K562 (cell line): ENCODE measurements at regions of chr12 and their contacts with region 1.

Region 1: DNA sequence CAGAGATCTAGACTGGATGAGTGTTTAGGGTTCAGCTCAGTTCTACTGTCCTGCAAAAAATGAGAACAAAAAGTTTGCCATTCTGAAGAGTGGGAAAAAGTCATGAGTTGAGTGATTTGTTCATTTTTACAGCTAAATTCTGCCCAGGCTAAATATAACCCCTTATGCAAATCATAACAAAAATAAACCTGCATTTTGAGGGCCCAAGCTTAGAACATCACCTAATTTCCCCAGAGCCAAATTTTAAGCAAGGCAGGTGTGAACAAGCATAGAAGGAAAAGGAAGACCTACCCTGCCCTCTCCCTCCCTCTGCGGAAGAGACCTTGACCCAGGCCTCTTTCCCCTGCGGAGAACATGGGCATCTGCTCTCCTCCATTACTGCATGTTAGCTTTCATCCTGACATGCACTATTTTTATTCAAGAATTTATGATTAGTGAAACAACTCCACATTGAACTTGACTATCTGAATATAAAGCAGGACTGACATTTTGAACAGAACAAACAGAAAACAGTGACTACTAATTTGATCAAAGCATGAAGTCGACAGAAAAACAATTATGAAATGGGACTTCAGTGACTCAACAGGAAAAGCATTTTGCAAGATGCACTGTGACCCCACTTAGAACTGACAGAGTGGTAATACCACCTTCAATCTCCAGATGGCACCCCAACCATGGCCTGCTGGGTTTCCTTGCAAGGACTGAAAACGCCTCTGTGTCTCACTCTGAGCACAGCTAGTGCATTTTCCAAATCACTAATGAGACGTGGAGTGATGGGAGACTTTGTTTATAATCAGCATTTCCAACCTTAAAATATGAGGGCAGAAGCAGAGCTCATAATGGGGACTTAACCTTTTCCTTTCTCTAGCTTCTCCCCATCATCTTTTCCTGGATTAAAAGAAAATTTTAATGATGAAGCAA is 30.9 kb upstream of the SELPLG start:
- DNase-seq: peak; percentile 74 to 88 (median 78)
- ATAC-seq: peak; percentile 98
- H3K4me3 ChIP-seq: no peak overlapping the region
- H3K27ac ChIP-seq: peak overlapping the region; percentile 60; the same call in 2 of the 3 replicates
- H3K4me1 ChIP-seq: peaks cover 0 to 13% of the 10 kb centered on the region in 2 experiments; a peak in 3 of 5 replicates
- H3K27me3 ChIP-seq: no peaks in the 10 kb centered on the region
- CTCF ChIP-seq: peak; percentile 90 to 96 (median 91)
- EP300 ChIP-seq: peak; percentile 12; the same call in 1 of the 2 replicates
- POLR2A ChIP-seq: no peak
- RAD21 ChIP-seq: peak; percentile 95 to 99

Region 2: GRCh38 chr12:108618079-108618952 is 46.3 kb before region 1 on chr12:
- CTCF ChIA-PET with region 1: no interaction called
- POLR2A ChIA-PET with region 1: no interaction called
- in situ Hi-C with region 1: no loop called
- intact Hi-C with region 1: no loop called
- DNase-seq: peak; percentile 82 to 91 (median 84)
- ATAC-seq: peak; percentile 94
- H3K4me3 ChIP-seq: no peak overlapping the region
- H3K27ac ChIP-seq: no peak overlapping the region
- H3K4me1 ChIP-seq: peaks cover 16 to 20% of the 10 kb centered on the region in 2 experiments; a peak in 3 of 5 replicates
- H3K27me3 ChIP-seq: no peaks in the 10 kb centered on the region
- CTCF ChIP-seq: peak; percentile 91 to 97 (median 96)
- EP300 ChIP-seq: no peak
- POLR2A ChIP-seq: no peak
- RAD21 ChIP-seq: peak; percentile 91 to 94

Region 3: GRCh38 chr12:108731105-108731865 is 66.7 kb after region 1 on chr12 and contains the start of gene CORO1C:
- CTCF ChIA-PET with region 1: no interaction called
- POLR2A ChIA-PET with region 1: interaction called, 5 read pairs
- in situ Hi-C with region 1: no loop called
- intact Hi-C with region 1: loop called (anchors 2 kb)
- DNase-seq: peak; percentile 95 to 97 (median 96)
- ATAC-seq: peak; percentile 77
- H3K4me3 ChIP-seq: peak within 1 kb of the TSS; percentile 89
- H3K27ac ChIP-seq: peak within 1 kb of the TSS; percentile 93
- H3K4me1 ChIP-seq: peaks cover 21 to 32% of the 10 kb centered on the region in 2 experiments
- H3K27me3 ChIP-seq: no peaks in the 10 kb centered on the region
- CTCF ChIP-seq: peak; percentile 77 to 85 (median 80)
- EP300 ChIP-seq: no peak; the same call in 1 of the 2 replicates
- POLR2A ChIP-seq: peak; percentile 78
- RAD21 ChIP-seq: peak in 1 of 2 experiments; percentile 53; a peak in 3 of 4 replicates
- polyA plus RNA-seq, gene CORO1C: 55.2 to 68.6 TPM

Region 4: GRCh38 chr12:108793756-108794441 is 129.3 kb after region 1 on chr12:
- CTCF ChIA-PET with region 1: no interaction called
- POLR2A ChIA-PET with region 1: interaction called, 3 read pairs
- in situ Hi-C with region 1: loop called (anchors 5 kb)
- intact Hi-C with region 1: no loop called
- DNase-seq: no peak
- ATAC-seq: peak; percentile 49
- H3K4me3 ChIP-seq: no peak overlapping the region
- H3K27ac ChIP-seq: no peak overlapping the region
- H3K4me1 ChIP-seq: peaks cover 0 to 10% of the 10 kb centered on the region in 2 experiments; a peak in 2 of 5 replicates
- H3K27me3 ChIP-seq: no peaks in the 10 kb centered on the region
- CTCF ChIP-seq: no peak
- EP300 ChIP-seq: no peak
- POLR2A ChIP-seq: no peak
- RAD21 ChIP-seq: no peak

Region 5: DNA sequence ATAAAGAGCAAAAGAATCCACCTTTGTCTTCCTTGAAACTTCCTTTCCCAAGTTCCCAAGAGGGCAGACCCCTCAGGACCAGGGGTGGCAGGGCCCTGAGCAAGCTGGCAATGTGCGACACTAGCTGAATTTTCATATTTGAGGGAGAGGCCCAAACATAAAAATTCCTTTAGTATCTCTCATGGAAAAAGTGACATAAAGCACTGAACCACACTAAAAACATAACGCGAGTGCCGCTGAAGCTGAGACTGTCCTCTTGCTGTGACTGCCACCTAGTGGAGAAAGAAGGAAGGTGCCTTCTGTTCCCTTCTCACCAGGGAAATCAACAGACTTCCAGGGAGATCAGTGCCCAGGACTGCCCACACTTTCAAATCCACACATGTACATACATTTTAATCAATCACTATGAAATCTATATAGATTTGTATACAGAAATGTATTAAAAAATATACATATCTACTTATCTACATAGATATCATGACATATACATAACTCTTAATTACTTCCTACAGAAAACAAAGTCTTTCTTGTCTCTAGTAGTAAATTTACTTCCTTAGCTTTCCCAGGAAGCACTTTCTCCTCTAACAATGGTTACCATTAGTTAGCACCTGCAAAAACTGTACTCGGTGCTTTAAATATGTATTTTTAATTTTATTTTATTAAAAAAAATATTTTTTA is 139.0 kb after region 1 on chr12:
- CTCF ChIA-PET with region 1: interaction called, 49 read pairs
- POLR2A ChIA-PET with region 1: interaction called, 16 read pairs
- in situ Hi-C with region 1: no loop called
- intact Hi-C with region 1: loop called (anchors 1 kb)
- DNase-seq: peak; percentile 82 to 87 (median 83)
- ATAC-seq: peak; percentile 96
- H3K4me3 ChIP-seq: no peak overlapping the region
- H3K27ac ChIP-seq: no peak overlapping the region
- H3K4me1 ChIP-seq: peaks cover 2 to 3% of the 10 kb centered on the region in 2 experiments; a peak in 3 of 5 replicates
- H3K27me3 ChIP-seq: no peaks in the 10 kb centered on the region
- CTCF ChIP-seq: peak; percentile 86 to 96 (median 86)
- EP300 ChIP-seq: no peak
- POLR2A ChIP-seq: no peak
- RAD21 ChIP-seq: peak; percentile 97 to 98

Region 6: GRCh38 chr12:108950991-108951739 is 286.6 kb after region 1 on chr12:
- CTCF ChIA-PET with region 1: interaction called, 13 read pairs
- POLR2A ChIA-PET with region 1: no interaction called
- in situ Hi-C with region 1: loop called (anchors 5 kb)
- intact Hi-C with region 1: loop called (anchors 1 kb)
- DNase-seq: peak; percentile 48 to 79 (median 68)
- ATAC-seq: peak; percentile 93
- H3K4me3 ChIP-seq: no peak overlapping the region
- H3K27ac ChIP-seq: no peak overlapping the region
- H3K4me1 ChIP-seq: no peaks in the 10 kb centered on the region; a peak in 1 of 5 replicates
- H3K27me3 ChIP-seq: peaks cover 4 to 21% of the 10 kb centered on the region in 2 experiments; a peak in 4 of 5 replicates
- CTCF ChIP-seq: peak; percentile 80 to 88 (median 86)
- EP300 ChIP-seq: no peak
- POLR2A ChIP-seq: no peak
- RAD21 ChIP-seq: peak; percentile 76 to 86

Region 7: DNA sequence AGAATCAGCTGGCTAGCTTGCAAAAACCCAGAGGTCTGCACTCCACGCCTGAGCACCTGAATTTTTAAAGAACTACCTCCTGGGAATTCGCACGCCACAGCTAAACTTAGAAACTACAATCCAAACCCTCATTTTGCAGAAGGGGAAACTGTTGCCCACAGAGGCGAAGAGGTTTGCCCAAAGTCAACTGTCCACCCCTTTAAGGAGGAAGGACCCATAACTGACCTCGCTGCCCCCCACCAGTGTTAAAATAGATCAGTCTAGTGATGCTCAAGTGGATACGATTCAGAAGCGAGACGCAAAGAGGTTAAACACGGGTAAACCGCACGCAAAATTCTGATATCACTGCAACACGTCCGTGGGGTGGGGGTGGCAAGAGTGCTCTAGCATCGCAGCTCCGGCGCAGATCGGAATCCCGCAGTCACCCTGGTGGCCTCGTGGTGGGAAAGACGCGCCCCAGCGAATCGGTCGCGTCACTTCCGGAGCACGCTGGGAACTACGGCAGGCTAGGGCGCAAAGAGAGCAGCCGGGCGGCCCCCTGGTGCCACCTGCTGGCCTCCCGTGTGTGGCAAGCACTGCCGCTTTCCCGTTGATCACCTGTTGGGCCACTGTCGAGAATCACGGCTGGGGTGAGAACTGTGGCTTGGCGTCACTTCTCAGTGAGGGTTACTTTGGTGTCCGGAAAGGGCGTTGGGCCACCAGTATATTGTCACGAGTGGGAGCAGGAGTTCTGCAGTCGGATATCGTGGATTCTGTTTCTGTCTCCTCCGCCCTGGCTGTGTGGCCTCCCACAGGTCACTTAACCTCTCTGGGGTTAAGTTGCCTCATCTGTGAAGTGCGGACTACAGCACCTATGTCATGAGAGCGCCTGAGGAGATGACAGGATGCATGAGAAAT is 428.7 kb after region 1 on chr12 and contains the start of gene ALKBH2:
- CTCF ChIA-PET with region 1: interaction called, 8 read pairs
- POLR2A ChIA-PET with region 1: no interaction called
- in situ Hi-C with region 1: loop called (anchors 10 kb)
- intact Hi-C with region 1: loop called (anchors 10 kb)
- DNase-seq: peak; percentile 86 to 96 (median 88)
- ATAC-seq: peak; percentile 77
- H3K4me3 ChIP-seq: peak within 1 kb of the TSS; percentile 47
- H3K27ac ChIP-seq: peak within 1 kb of the TSS; percentile 75
- H3K4me1 ChIP-seq: peaks cover 6 to 41% of the 10 kb centered on the region in 2 experiments; a peak in 4 of 5 replicates
- H3K27me3 ChIP-seq: no peaks in the 10 kb centered on the region
- CTCF ChIP-seq: peak; percentile 95 to 98 (median 98)
- EP300 ChIP-seq: no peak
- POLR2A ChIP-seq: peak; percentile 85
- RAD21 ChIP-seq: peak; percentile 89 to 93
- polyA plus RNA-seq, gene ALKBH2: 5.9 to 13.6 TPM